ENCODE measurements at regions of chrX and their contacts with region 1.

Region 1: GRCh38 chrX:79270401-79270800 is 96.7 kb downstream of the ITM2A start:
- DNase-seq: peak in 4 of 5 donors; percentile 34 to 54 (median 44)
- ATAC-seq: peak in 2 of 4 donors; percentile 54 to 83
- H3K4me3 ChIP-seq: no peak overlapping the region
- H3K27ac ChIP-seq: peak overlapping the region in 4 of 12 donors; percentile 39 to 58 (median 48)
- H3K4me1 ChIP-seq: peaks cover 0 to 13% (median 0%) of the 10 kb centered on the region in 12 donors
- H3K27me3 ChIP-seq: peaks cover 0 to 5% (median 0%) of the 10 kb centered on the region in 9 donors
- CTCF ChIP-seq: peak in 11 of 12 donors; percentile 28 to 62 (median 48)
- POLR2A ChIP-seq: no peak

Region 2: DNA sequence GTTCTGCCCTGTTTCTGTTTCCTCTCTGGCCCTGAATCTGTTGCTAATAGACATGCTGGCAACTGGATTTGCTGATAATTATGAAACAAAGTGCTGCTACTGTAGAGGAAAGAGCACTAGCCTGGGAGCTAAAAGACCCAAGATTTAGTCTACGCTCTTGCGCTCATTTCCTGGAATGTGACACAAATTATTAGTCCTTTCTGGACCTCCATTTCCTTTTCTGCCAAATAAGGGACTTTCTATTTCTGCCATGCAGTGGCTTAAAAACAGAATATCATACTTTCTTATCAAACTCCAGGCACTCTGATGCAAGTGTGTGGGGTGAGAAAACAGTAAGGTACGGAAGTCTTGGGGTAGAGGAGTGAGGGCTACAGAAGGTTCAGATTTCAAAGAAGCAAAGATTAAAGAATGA is 174.2 kb before region 1 on chrX:
- intact Hi-C with region 1: loop called in 4 of 10 experiments (anchors 10 kb)
- DNase-seq: peak in 1 of 5 donors; percentile 2
- ATAC-seq: peak in 1 of 4 donors; percentile 78
- H3K4me3 ChIP-seq: no peak overlapping the region
- H3K27ac ChIP-seq: peak overlapping the region in 6 of 12 donors; percentile 31 to 80 (median 62)
- H3K4me1 ChIP-seq: peaks cover 0 to 8% (median 0%) of the 10 kb centered on the region in 12 donors
- H3K27me3 ChIP-seq: no peaks in the 10 kb centered on the region
- CTCF ChIP-seq: no peak
- POLR2A ChIP-seq: no peak

Region 3: DNA sequence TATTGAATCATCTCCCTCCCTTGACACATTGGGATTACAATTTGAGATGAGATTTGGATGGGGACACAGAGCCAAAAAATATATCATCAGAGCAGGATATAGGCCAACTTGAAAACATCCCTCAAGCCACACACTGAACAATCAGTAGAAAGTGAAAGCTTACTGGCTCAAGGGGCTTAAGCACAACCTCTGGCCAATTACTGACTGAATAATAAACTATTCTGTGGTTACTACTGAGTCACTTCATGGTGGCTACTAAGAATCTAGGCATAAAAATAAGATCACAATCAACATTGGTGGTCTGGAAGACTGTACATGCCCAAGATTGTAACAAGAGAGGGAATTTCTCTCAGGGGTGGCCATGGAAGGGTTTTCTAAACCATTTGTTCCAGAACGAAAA is 153.3 kb before region 1 on chrX:
- intact Hi-C with region 1: no loop called
- DNase-seq: no peak
- ATAC-seq: no peak
- H3K4me3 ChIP-seq: no peak overlapping the region
- H3K27ac ChIP-seq: no peak overlapping the region
- H3K4me1 ChIP-seq: no peaks in the 10 kb centered on the region
- H3K27me3 ChIP-seq: no peaks in the 10 kb centered on the region
- CTCF ChIP-seq: no peak
- POLR2A ChIP-seq: no peak

Region 4: DNA sequence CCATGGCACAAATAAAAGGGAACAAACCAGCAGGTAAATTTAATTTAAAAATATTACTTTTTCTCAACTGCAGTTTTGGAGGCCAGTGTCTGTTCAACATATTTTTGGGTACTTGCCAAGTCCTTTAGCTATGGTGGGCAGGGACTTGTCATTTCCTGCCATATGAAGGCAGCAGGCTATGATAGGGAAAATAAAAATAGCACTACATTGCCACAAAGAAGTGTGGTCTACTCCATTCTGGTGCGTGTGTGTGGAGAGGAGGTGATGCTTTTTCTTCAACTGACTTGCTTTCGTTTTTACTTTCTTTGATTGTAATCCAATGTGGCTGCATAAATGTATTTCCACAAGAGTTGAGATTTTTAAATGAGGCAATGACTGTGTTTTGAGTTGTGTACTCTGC is 108.7 kb before region 1 on chrX:
- intact Hi-C with region 1: loop called in 1 of 10 experiments (anchors 10 kb)
- DNase-seq: no peak
- ATAC-seq: peak in 2 of 4 donors; percentile 42 to 54
- H3K4me3 ChIP-seq: peak overlapping the region in 7 of 12 donors; percentile 14 to 41 (median 26)
- H3K27ac ChIP-seq: peak overlapping the region in 9 of 12 donors; percentile 16 to 62 (median 34)
- H3K4me1 ChIP-seq: peaks cover 0 to 12% (median 0%) of the 10 kb centered on the region in 12 donors
- H3K27me3 ChIP-seq: no peaks in the 10 kb centered on the region
- CTCF ChIP-seq: no peak
- POLR2A ChIP-seq: no peak

Region 5: GRCh38 chrX:79412972-79413371 is 142.6 kb after region 1 on chrX:
- intact Hi-C with region 1: loop called in 1 of 10 experiments (anchors 10 kb)
- DNase-seq: no peak
- ATAC-seq: no peak
- H3K4me3 ChIP-seq: peak overlapping the region in 9 of 12 donors; percentile 17 to 54 (median 42)
- H3K27ac ChIP-seq: peak overlapping the region in 3 of 12 donors; percentile 24 to 67 (median 42)
- H3K4me1 ChIP-seq: no peaks in the 10 kb centered on the region
- H3K27me3 ChIP-seq: no peaks in the 10 kb centered on the region
- CTCF ChIP-seq: peak; percentile 19 to 57 (median 38)
- POLR2A ChIP-seq: no peak

Region 6: GRCh38 chrX:79623098-79623762 is 352.8 kb after region 1 on chrX:
- intact Hi-C with region 1: no loop called
- DNase-seq: no peak
- ATAC-seq: no peak
- H3K4me3 ChIP-seq: no peak overlapping the region
- H3K27ac ChIP-seq: no peak overlapping the region
- H3K4me1 ChIP-seq: no peaks in the 10 kb centered on the region
- H3K27me3 ChIP-seq: peaks cover 0 to 9% (median 0%) of the 10 kb centered on the region in 9 donors
- CTCF ChIP-seq: no peak
- POLR2A ChIP-seq: no peak

Measured in heart left ventricle (tissue), 16 donors.